GM10248 (cell line): ENCODE measurements at regions of chr17 and their contacts with region 1.

Region 1: GRCh38 chr17:1122533-1123392 is 57.0 kb downstream of the ABR start:
- DNase-seq: peak; percentile 90
- CTCF ChIP-seq: peak; percentile 82

Region 2: GRCh38 chr17:1108861-1109605 is 13.7 kb before region 1 on chr17:
- CTCF ChIA-PET with region 1: interaction called, 39 read pairs
- POLR2A ChIA-PET with region 1: no interaction called
- DNase-seq: peak; percentile 71
- CTCF ChIP-seq: no peak

Region 3: DNA sequence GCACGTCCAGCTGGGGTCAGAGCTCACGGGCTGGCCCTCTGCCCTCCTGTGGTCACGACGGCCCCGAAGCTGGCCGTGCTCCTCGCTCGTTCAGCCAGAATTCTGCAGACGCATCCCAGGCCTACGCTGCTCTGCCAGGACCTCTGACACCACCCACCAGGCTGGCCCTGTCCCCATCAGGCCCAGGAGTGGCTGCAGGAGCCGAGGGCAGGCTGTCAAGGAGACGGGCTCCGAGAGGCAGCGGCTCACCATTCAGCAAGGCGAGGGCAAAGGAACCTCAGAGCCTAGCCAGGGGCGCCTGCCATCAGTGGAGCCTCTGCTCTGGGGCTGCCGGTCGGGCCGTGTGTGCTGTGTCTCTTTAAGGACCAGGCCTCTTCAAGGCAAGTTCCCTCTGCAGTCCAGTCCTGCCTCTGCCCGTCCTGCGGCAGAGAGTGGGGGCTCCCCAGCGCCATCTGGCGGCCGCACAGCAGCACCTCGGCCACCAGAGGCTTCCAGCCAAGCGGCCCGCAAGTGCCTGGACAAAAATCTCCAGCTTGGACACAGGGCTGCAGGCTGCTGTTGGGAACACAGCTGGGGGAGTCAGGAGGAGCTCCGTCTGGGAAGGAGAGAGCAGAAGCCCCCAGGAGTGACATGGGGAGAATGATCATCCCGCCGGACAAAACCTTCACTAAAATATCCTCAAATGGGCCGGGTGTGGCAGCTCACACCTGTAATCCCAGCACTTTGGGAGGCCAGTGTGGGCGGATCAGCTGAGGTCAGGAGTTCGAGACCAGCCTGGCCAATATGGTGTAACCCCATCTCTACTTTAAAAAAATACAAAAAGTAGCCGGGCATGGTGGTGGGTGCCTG is 64.4 kb after region 1 on chr17:
- CTCF ChIA-PET with region 1: interaction called, 153 read pairs
- POLR2A ChIA-PET with region 1: no interaction called
- DNase-seq: peak; percentile 85
- CTCF ChIP-seq: peak; percentile 96

Region 4: DNA sequence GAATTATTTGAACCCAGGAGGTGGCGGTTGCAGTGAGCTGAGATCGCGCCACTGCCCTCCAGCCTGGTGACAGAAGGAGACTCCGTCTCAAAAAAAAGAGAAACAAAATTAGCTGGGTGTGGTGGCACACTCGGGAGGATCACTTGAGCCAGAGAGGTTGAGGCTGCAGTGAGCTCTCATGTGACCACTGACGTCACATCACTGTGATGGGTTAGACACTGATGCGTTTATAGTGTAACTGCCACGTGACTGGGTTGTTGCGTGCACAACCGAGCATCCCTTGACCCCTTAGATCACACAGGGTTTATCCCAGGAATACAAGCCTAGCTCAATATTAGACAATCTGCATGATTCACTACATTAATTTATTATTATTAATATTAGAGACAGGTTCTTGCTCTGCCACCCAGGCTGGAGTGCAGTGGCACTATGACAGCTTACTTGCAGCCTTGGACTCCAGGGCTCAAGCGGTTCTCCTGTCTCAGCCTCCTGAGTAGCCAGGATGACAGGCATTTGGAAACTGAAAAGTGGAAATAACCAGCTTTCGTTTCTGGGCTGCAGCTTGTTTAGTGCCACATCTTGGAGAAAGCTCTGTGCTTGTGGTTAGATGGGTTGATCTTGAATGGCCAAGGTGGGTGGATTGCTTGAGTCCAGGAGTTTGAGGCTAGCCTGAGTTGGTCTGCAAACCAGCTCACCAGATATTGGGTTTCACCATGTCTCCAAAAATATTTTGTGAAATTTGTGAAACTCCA is 83.4 kb after region 1 on chr17:
- CTCF ChIA-PET with region 1: interaction called, 13 read pairs
- POLR2A ChIA-PET with region 1: no interaction called
- DNase-seq: no peak
- CTCF ChIP-seq: no peak

Region 5: GRCh38 chr17:1331708-1332107 is 208.9 kb after region 1 on chr17:
- CTCF ChIA-PET with region 1: interaction called, 16 read pairs
- POLR2A ChIA-PET with region 1: no interaction called
- DNase-seq: no peak
- CTCF ChIP-seq: no peak